ENCODE measurements at regions of chr17 and their contacts with region 1.

Region 1: DNA sequence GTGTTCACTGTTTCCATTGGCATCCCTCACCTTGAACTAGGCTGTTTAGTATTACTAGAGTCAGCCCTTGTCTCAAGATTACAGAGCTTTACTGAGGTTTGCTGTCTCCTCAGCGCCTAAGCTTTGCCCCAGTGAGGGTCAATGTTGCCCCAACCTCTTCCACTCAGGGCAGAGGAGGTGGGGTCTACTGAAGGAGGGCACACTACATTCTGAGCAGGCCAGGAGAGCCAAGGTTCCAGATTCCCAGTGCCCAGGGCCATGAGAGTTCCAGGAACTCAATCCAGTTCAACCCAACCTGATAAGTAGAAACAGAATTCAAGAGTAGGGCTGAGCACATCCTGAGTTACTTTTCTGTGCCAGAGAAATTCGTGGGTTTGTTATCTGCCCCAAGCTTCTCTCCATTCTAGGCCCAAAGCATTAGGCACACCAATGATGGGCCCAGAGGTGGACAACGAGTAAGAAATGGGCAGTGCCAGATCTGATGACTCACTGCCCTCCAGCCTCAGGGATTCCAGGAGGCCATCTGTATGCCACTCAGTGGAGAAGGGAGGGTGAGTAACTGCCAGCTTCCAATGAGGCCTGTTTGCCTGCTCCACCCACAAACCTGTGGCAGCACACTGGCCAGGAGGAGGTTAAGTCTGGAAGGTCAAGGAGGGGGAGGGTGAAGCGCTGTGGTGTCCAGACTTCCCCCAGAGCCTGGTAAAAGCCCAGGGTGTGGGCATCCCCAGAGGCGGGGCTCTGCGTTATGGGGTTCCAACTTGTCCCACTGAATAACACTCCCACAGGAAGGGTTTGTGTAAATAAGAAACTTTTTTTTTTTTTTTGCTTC is 8.3 kb downstream of the TUBG2 start:
- DNase-seq: peak; percentile 90 to 94
- H3K4me3 ChIP-seq: no peak overlapping the region; the same call in 1 of the 2 replicates
- H3K27ac ChIP-seq: peak overlapping the region; percentile 56
- H3K4me1 ChIP-seq: peaks cover 32% of the 10 kb centered on the region
- H3K27me3 ChIP-seq: no peaks in the 10 kb centered on the region
- CTCF ChIP-seq: no peak

Region 2: GRCh38 chr17:42618442-42619150 is 48.7 kb before region 1 on chr17:
- CTCF ChIA-PET with region 1: interaction called, 4 read pairs
- POLR2A ChIA-PET with region 1: no interaction called
- intact Hi-C with region 1: loop called (anchors 2 kb)
- DNase-seq: peak; percentile 79
- H3K4me3 ChIP-seq: no peak overlapping the region
- H3K27ac ChIP-seq: 0 out of 2 replicates have a peak overlapping the region, but pooled peaks have one; percentile 24
- H3K4me1 ChIP-seq: peaks cover 27% of the 10 kb centered on the region
- H3K27me3 ChIP-seq: no peaks in the 10 kb centered on the region
- CTCF ChIP-seq: peak; percentile 59; the same call in 1 of the 2 replicates

Region 3: GRCh38 chr17:42744806-42745617 is 77.7 kb after region 1 on chr17 and contains the start of gene EZH1:
- CTCF ChIA-PET with region 1: no interaction called
- POLR2A ChIA-PET with region 1: no interaction called
- intact Hi-C with region 1: no loop called
- DNase-seq: peak; percentile 75 to 92
- H3K4me3 ChIP-seq: peak within 1 kb of the TSS; percentile 78
- H3K27ac ChIP-seq: peak within 1 kb of the TSS; percentile 65
- H3K4me1 ChIP-seq: peaks cover 13% of the 10 kb centered on the region
- H3K27me3 ChIP-seq: no peaks in the 10 kb centered on the region
- CTCF ChIP-seq: no peak
- total RNA-seq, gene EZH1: 22.8 and 24.8 TPM in 2 replicates